Activated naive CD4-positive, alpha-beta T cell treated with anti-CD3 and anti-CD28 coated beads for 36 hours (primary cell): ENCODE measurements at regions of chr20 and their contacts with region 1.

Region 1: GRCh38 chr20:1657556-1658334 is at the start of gene SIRPG:
- DNase-seq: peak; percentile 68
- H3K4me3 Mint-ChIP-seq: peak within 1 kb of the TSS; percentile 81
- H3K27ac Mint-ChIP-seq: peak within 1 kb of the TSS; percentile 99
- H3K4me1 Mint-ChIP-seq: peaks cover 86% of the 10 kb centered on the region
- H3K27me3 Mint-ChIP-seq: no peaks in the 10 kb centered on the region
- total RNA-seq, gene SIRPG: 35.9 to 36.3 TPM

Region 2: GRCh38 chr20:1474825-1475603 is 182.7 kb before region 1 on chr20:
- CTCF ChIA-PET with region 1: no interaction called
- intact Hi-C with region 1: no loop called
- DNase-seq: peak; percentile 27
- H3K4me3 Mint-ChIP-seq: no peak overlapping the region
- H3K27ac Mint-ChIP-seq: no peak overlapping the region
- H3K4me1 Mint-ChIP-seq: no peaks in the 10 kb centered on the region
- H3K27me3 Mint-ChIP-seq: no peaks in the 10 kb centered on the region

Region 3: DNA sequence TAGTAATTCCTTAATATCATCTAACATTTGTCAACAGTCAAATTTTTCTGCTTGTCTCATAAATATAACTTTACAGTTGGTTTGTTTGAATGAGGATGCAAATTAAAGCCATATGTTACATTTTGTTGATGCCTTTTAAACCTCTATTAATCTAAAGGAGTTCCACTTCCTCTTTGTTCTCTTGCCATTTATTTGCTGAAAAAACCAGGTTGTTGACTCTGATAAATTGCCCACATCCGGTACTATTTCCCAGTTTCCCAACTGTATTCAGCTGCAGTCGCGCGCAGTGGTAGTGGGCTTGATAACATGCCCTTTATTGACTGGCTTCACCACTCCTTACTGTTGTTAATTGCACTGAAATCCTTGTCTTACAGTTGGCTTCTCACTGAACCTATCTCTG is 133.7 kb before region 1 on chr20:
- CTCF ChIA-PET with region 1: no interaction called
- intact Hi-C with region 1: no loop called
- DNase-seq: no peak
- H3K4me3 Mint-ChIP-seq: no peak overlapping the region
- H3K27ac Mint-ChIP-seq: no peak overlapping the region
- H3K4me1 Mint-ChIP-seq: peaks cover 3% of the 10 kb centered on the region
- H3K27me3 Mint-ChIP-seq: peaks cover 2% of the 10 kb centered on the region

Region 4: DNA sequence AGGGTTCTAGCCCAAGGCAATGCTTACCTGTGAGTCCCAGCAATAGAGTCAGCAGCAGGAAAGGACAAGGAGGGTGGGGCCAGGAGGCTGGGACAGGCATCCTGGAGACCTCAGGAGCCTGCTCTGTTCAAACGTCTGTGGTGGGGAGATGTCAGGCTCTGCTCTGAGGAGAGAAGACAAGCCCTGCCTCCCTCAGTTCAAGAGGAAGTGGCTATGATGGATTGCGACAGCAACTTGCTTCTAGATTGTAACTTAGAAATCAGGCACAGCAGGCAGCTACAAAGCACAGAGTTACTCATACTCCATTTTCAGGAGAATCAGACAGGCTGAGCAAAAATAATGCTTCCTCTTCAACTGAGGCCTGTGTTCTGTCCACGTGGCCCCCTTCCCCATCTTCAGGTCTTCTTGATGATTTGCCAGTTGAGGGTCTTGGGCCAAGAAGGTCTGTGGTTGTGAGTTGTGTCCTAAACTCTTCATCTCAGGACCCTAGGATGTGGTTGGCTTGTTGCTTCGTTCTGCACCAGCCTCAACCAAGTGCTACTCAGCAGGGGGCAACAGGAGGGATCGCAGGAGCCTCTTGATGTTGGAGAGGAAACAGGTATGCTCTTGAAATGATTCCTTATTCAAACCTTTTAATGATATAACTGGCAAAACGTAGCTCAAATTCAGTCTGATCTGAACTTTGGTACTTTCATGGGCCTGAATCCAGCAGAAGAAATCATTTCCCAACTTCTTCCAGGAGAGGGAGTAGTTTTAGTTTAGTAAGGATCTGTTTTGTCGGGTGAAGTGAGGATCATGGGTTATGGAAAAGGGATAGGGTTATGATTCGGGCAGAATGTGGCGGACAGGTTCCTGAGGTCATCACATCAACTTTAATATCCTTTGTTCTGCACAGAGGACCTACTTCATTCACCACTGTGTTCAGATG is 68.9 kb before region 1 on chr20:
- CTCF ChIA-PET with region 1: no interaction called
- intact Hi-C with region 1: loop called (anchors 2 kb)
- DNase-seq: peak; percentile 58
- H3K4me3 Mint-ChIP-seq: peak overlapping the region; percentile 20
- H3K27ac Mint-ChIP-seq: peak overlapping the region; percentile 88
- H3K4me1 Mint-ChIP-seq: peaks cover 42% of the 10 kb centered on the region
- H3K27me3 Mint-ChIP-seq: no peaks in the 10 kb centered on the region

Region 5: DNA sequence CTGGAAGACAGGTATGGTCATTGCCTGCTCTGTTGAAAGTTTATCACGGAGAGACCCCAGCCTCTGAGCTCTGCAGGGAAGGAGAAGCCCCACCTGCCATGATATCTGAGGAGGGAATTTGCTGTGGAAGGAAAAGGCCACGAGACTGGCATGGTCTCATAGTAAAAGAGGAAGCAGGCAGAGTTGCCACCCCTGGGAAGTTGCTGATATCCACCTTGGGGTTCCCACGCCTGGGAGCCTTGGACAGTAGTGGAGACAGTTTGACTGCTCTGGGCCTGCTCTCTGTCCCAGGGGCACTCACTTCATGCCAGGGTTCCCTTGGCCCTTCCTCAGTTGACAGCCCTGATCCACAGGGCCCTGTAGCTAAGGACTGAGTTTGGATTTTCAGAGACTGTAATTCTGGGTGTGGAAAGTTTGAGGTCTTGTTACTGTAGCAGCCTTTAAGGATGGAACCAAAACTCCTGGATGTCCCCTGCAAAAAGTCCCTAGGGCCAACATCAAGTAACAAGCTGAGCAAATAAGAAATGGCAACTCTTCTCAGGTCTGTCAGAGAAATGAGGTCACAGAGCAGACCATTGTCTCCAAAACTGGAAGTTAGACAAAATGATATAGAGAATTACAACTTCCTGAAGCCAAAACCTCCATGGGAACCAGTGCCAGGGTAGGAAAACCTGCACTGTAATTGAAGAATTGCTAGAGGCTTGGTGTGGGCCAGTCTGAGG is 31.1 kb before region 1 on chr20:
- CTCF ChIA-PET with region 1: interaction called, 5 read pairs
- intact Hi-C with region 1: loop called (anchors 1 kb)
- DNase-seq: peak; percentile 18
- H3K4me3 Mint-ChIP-seq: no peak overlapping the region
- H3K27ac Mint-ChIP-seq: peak overlapping the region; percentile 89
- H3K4me1 Mint-ChIP-seq: peaks cover 94% of the 10 kb centered on the region
- H3K27me3 Mint-ChIP-seq: no peaks in the 10 kb centered on the region

Region 6: DNA sequence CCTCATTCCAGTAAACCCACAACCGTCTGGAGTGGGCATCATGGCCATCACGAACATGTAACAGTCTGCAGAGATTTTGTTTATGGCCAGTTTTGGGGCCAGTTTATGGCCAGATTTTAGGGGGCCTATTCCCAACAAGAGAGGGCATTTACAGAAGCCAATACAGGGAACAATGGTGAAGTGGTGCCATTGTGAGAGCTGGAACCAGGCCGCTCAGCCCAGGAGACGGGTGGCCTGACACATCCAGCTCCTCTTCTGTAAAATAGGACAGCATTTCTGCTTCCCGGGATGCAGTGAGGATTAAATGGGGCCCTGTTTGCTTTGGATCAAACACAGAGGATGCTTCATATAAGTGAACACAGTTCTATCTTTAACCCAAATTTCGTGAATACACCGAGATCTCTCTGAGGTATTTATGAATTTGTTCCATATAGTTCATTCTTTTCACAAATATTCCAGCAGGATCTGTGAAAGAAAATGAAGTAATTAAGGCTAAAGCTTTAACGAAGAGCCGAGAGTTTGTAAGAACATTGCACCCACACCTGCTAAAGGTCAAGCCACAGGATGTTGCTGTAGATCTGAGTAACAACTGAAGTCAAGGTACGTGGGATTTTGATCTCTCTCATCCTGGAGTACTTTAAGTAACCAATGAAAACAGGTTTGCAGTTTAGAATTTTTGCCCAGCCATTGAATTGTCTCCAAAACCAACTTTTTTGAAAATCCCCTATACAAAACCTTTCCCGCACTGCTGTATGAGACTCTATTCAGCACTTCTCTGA is 14.3 kb after region 1 on chr20:
- CTCF ChIA-PET with region 1: interaction called, 3 read pairs
- intact Hi-C with region 1: loop called (anchors 1 kb)
- DNase-seq: peak; percentile 73
- H3K4me3 Mint-ChIP-seq: peak overlapping the region; percentile 44
- H3K27ac Mint-ChIP-seq: peak overlapping the region; percentile 97
- H3K4me1 Mint-ChIP-seq: peaks cover 99% of the 10 kb centered on the region
- H3K27me3 Mint-ChIP-seq: no peaks in the 10 kb centered on the region

Region 7: GRCh38 chr20:1685304-1686052 is 27.7 kb after region 1 on chr20:
- CTCF ChIA-PET with region 1: interaction called, 3 read pairs
- intact Hi-C with region 1: loop called (anchors 2 kb)
- DNase-seq: peak; percentile 56
- H3K4me3 Mint-ChIP-seq: peak overlapping the region; percentile 83
- H3K27ac Mint-ChIP-seq: peak overlapping the region; percentile 95
- H3K4me1 Mint-ChIP-seq: peaks cover 82% of the 10 kb centered on the region
- H3K27me3 Mint-ChIP-seq: no peaks in the 10 kb centered on the region